ENCODE measurements at regions of chr6 and their contacts with region 1.

Region 1: GRCh38 chr6:26445934-26446667 is 5.8 kb downstream of the BTN3A3 start:
- DNase-seq: no peak
- ATAC-seq: peak in 1 of 8 donors; percentile 38
- H3K4me3 ChIP-seq: no peak overlapping the region
- H3K27ac ChIP-seq: peak overlapping the region in 1 of 10 donors; percentile 35
- H3K4me1 ChIP-seq: peaks cover 0 to 39% (median 13%) of the 10 kb centered on the region in 9 donors
- H3K27me3 ChIP-seq: no peaks in the 10 kb centered on the region
- CTCF ChIP-seq: no peak

Region 2: GRCh38 chr6:26363882-26364701 is 82.0 kb before region 1 on chr6:
- intact Hi-C with region 1: no loop called
- DNase-seq: no peak
- ATAC-seq: peak in 3 of 8 donors; percentile 29 to 48 (median 43)
- H3K4me3 ChIP-seq: peak overlapping the region; percentile 44 to 73 (median 64)
- H3K27ac ChIP-seq: peak overlapping the region; percentile 25 to 96 (median 82)
- H3K4me1 ChIP-seq: peaks cover 0 to 30% (median 20%) of the 10 kb centered on the region in 9 donors
- H3K27me3 ChIP-seq: no peaks in the 10 kb centered on the region
- CTCF ChIP-seq: no peak

Region 3: GRCh38 chr6:26431258-26432172 is 14.6 kb before region 1 on chr6:
- intact Hi-C with region 1: no loop called
- DNase-seq: no peak
- ATAC-seq: peak in 4 of 8 donors; percentile 21 to 57 (median 44)
- H3K4me3 ChIP-seq: no peak overlapping the region
- H3K27ac ChIP-seq: peak overlapping the region in 1 of 10 donors; percentile 23
- H3K4me1 ChIP-seq: peaks cover 0 to 20% (median 0%) of the 10 kb centered on the region in 9 donors
- H3K27me3 ChIP-seq: peaks cover 0 to 6% (median 0%) of the 10 kb centered on the region in 7 donors
- CTCF ChIP-seq: no peak

Region 4: GRCh38 chr6:26457806-26458688 is 11.9 kb after region 1 on chr6 and contains the start of gene BTN2A1:
- intact Hi-C with region 1: loop called in 1 of 10 experiments (anchors 1 kb)
- DNase-seq: peak; percentile 54 to 90
- ATAC-seq: peak; percentile 98 to 100 (median 99)
- H3K4me3 ChIP-seq: peak within 1 kb of the TSS; percentile 44 to 93 (median 71)
- H3K27ac ChIP-seq: peak within 1 kb of the TSS; percentile 78 to 98 (median 96)
- H3K4me1 ChIP-seq: peaks cover 0 to 65% (median 48%) of the 10 kb centered on the region in 9 donors
- H3K27me3 ChIP-seq: no peaks in the 10 kb centered on the region
- CTCF ChIP-seq: peak in 2 of 9 donors; percentile 8 to 11
- total RNA-seq, gene BTN2A1: 12.7 to 19.9 (median 15.5) TPM

Region 5: GRCh38 chr6:26592649-26593048 is 146.5 kb after region 1 on chr6:
- intact Hi-C with region 1: no loop called
- DNase-seq: no peak
- ATAC-seq: no peak
- H3K4me3 ChIP-seq: no peak overlapping the region
- H3K27ac ChIP-seq: no peak overlapping the region
- H3K4me1 ChIP-seq: peaks cover 0 to 30% (median 12%) of the 10 kb centered on the region in 9 donors
- H3K27me3 ChIP-seq: peaks cover 0 to 67% (median 54%) of the 10 kb centered on the region in 7 donors
- CTCF ChIP-seq: no peak

Region 6: GRCh38 chr6:27592481-27593199 is 1146.5 kb after region 1 on chr6:
- intact Hi-C with region 1: no loop called
- DNase-seq: no peak
- ATAC-seq: no peak
- H3K4me3 ChIP-seq: peak overlapping the region in 1 of 10 donors; percentile 16
- H3K27ac ChIP-seq: no peak overlapping the region
- H3K4me1 ChIP-seq: peaks cover 0 to 10% (median 0%) of the 10 kb centered on the region in 9 donors
- H3K27me3 ChIP-seq: peaks cover 10 to 99% (median 86%) of the 10 kb centered on the region in 7 donors
- CTCF ChIP-seq: no peak

Measured in heart right ventricle (tissue), 16 donors.